ENCODE measurements at regions of chr15 and their contacts with region 1.

Region 1: DNA sequence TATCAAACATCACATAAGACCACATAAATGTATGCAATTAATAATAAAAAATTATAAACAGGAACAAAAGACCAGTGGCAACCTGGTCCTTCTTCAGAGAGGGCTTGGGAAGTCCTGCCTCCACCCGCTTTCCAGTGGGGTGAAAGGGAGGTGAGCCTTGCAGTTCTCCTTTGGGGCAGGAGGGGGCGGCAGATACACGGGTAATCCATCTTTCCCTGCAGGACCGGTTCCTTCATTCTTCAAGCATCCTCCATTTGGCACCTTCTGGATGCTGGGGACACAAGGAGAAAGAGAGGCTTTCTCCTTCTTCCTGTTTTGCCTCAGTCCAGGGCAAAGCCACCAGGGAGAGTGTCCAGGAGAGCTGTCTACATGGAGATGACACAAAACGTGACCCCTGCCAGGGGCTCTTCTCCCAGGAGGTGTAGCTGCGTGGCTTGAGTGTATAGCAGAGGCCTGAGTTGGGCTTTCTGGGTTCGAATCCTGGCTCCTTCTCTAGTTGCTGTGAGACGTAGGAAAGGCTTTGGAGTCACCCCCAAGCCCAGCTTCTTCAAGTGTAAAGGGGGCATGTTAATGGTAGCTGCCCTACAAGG is 23.2 kb downstream of the RPLP1 start:
- DNase-seq: peak; percentile 45 to 82 (median 78)
- ATAC-seq: peak; percentile 95
- H3K4me3 ChIP-seq: no peak overlapping the region
- H3K4me3 Mint-ChIP-seq: no peak overlapping the region
- H3K27ac ChIP-seq: no peak overlapping the region
- H3K27ac Mint-ChIP-seq: no peak overlapping the region
- H3K4me1 ChIP-seq: no peaks in the 10 kb centered on the region
- H3K4me1 Mint-ChIP-seq: no peaks in the 10 kb centered on the region
- H3K27me3 ChIP-seq: no peaks in the 10 kb centered on the region
- H3K27me3 Mint-ChIP-seq: peaks cover 6% of the 10 kb centered on the region
- CTCF ChIP-seq: peak; percentile 98

Region 2: DNA sequence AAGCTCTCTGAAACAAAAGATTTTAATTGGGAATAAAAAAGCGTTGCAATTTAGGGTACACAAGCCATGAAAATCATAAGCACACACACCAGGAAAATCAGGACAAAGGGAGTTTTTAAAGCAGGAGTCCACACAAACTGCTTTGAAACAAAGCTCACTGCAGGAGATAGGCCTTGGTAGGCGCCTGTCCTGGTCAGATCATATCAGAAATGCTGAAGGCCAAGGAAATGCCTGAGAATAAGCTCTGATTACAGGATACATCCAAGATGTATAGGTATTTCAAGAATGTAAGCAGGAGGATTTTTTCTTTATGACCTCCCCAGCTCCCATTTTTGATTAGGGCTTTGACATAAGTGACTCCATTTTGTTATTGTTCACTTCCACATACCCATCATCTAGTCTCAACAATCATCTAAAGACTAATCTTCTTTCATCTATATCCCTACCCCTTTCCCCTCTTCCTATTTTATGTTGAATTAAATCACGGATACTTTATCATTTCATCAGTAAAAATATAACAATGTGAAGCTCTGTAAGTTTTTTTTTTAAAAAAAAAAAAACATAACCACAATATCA is 526.8 kb before region 1 on chr15:
- CTCF ChIA-PET with region 1: no interaction called
- POLR2A ChIA-PET with region 1: no interaction called
- intact Hi-C with region 1: no loop called
- DNase-seq: no peak
- ATAC-seq: no peak
- H3K4me3 ChIP-seq: no peak overlapping the region
- H3K4me3 Mint-ChIP-seq: no peak overlapping the region
- H3K27ac ChIP-seq: no peak overlapping the region
- H3K27ac Mint-ChIP-seq: no peak overlapping the region
- H3K4me1 ChIP-seq: no peaks in the 10 kb centered on the region
- H3K4me1 Mint-ChIP-seq: no peaks in the 10 kb centered on the region
- H3K27me3 ChIP-seq: no peaks in the 10 kb centered on the region
- H3K27me3 Mint-ChIP-seq: peaks cover 10% of the 10 kb centered on the region
- CTCF ChIP-seq: no peak

Region 3: GRCh38 chr15:69045808-69046207 is 430.1 kb before region 1 on chr15:
- CTCF ChIA-PET with region 1: no interaction called
- POLR2A ChIA-PET with region 1: no interaction called
- intact Hi-C with region 1: no loop called
- DNase-seq: no peak
- ATAC-seq: no peak
- H3K4me3 ChIP-seq: no peak overlapping the region
- H3K4me3 Mint-ChIP-seq: no peak overlapping the region
- H3K27ac ChIP-seq: no peak overlapping the region
- H3K27ac Mint-ChIP-seq: no peak overlapping the region
- H3K4me1 ChIP-seq: no peaks in the 10 kb centered on the region
- H3K4me1 Mint-ChIP-seq: no peaks in the 10 kb centered on the region
- H3K27me3 ChIP-seq: no peaks in the 10 kb centered on the region
- H3K27me3 Mint-ChIP-seq: peaks cover 5% of the 10 kb centered on the region
- CTCF ChIP-seq: no peak

Region 4: GRCh38 chr15:69462493-69463181 is 13.2 kb before region 1 on chr15:
- CTCF ChIA-PET with region 1: interaction called, 17 read pairs
- POLR2A ChIA-PET with region 1: no interaction called
- intact Hi-C with region 1: no loop called
- DNase-seq: peak; percentile 84 to 96 (median 93)
- ATAC-seq: peak; percentile 97
- H3K4me3 ChIP-seq: peak overlapping the region; percentile 69 to 72
- H3K4me3 Mint-ChIP-seq: peak overlapping the region; percentile 91
- H3K27ac ChIP-seq: peak overlapping the region; percentile 66 to 70
- H3K27ac Mint-ChIP-seq: peak overlapping the region; percentile 93
- H3K4me1 ChIP-seq: peaks cover 21% of the 10 kb centered on the region
- H3K4me1 Mint-ChIP-seq: peaks cover 26% of the 10 kb centered on the region
- H3K27me3 ChIP-seq: no peaks in the 10 kb centered on the region
- H3K27me3 Mint-ChIP-seq: no peaks in the 10 kb centered on the region
- CTCF ChIP-seq: peak; percentile 81

Region 5: DNA sequence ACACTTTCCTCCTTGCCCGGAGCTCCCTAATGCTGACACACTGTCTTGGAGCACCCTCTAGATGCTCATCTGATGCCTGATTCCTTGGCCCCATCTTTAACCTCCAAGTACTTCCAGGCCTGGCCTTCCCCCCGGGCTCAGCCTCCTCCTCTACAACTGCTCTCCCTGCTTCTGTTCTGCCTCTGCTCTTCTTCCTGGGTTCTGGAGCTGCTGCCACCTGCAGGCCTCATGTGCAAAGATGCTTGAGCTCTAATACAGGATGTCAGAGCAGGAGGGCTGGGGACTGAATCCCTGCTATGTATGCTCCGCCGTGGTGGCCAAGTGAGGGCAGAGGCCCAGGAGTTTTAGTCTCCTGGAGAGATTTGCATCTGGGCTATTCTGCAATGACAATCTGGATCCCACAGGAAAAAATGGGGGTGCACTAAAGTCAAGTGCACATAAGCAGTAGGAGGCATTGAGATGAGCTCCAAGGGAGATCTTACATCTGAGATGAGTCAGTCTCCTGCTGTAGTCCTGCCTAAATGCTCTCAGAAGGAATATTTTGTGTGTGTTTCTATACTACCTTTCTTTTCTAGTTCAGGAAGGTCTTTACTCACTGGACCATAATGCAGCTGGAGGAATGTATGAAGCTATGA is 991.1 kb after region 1 on chr15:
- CTCF ChIA-PET with region 1: interaction called, 76 read pairs
- POLR2A ChIA-PET with region 1: no interaction called
- intact Hi-C with region 1: no loop called
- DNase-seq: peak in 7 of 9 experiments; percentile 35 to 71 (median 55)
- ATAC-seq: peak; percentile 79
- H3K4me3 ChIP-seq: no peak overlapping the region
- H3K4me3 Mint-ChIP-seq: no peak overlapping the region
- H3K27ac ChIP-seq: no peak overlapping the region
- H3K27ac Mint-ChIP-seq: no peak overlapping the region
- H3K4me1 ChIP-seq: no peaks in the 10 kb centered on the region
- H3K4me1 Mint-ChIP-seq: peaks cover 5% of the 10 kb centered on the region
- H3K27me3 ChIP-seq: no peaks in the 10 kb centered on the region
- H3K27me3 Mint-ChIP-seq: peaks cover 8% of the 10 kb centered on the region
- CTCF ChIP-seq: peak; percentile 58

Region 6: GRCh38 chr15:70584838-70585706 is 1109.2 kb after region 1 on chr15:
- CTCF ChIA-PET with region 1: no interaction called
- POLR2A ChIA-PET with region 1: no interaction called
- intact Hi-C with region 1: loop called (anchors 1 to 10 kb)
- DNase-seq: peak; percentile 25 to 70 (median 59)
- ATAC-seq: peak; percentile 82
- H3K4me3 ChIP-seq: peak overlapping the region in 1 of 2 experiments; percentile 33
- H3K4me3 Mint-ChIP-seq: peak overlapping the region; percentile 53
- H3K27ac ChIP-seq: no peak overlapping the region
- H3K27ac Mint-ChIP-seq: no peak overlapping the region
- H3K4me1 ChIP-seq: peaks cover 12% of the 10 kb centered on the region
- H3K4me1 Mint-ChIP-seq: peaks cover 10% of the 10 kb centered on the region
- H3K27me3 ChIP-seq: peaks cover 0 to 7% of the 10 kb centered on the region in 2 experiments
- H3K27me3 Mint-ChIP-seq: peaks cover 20% of the 10 kb centered on the region
- CTCF ChIP-seq: peak; percentile 69

Region 7: GRCh38 chr15:70722266-70723121 is 1246.6 kb after region 1 on chr15:
- CTCF ChIA-PET with region 1: interaction called, 13 read pairs
- POLR2A ChIA-PET with region 1: no interaction called
- intact Hi-C with region 1: loop called (anchors 10 kb)
- DNase-seq: peak in 2 of 9 experiments; percentile 57 to 70
- ATAC-seq: no peak
- H3K4me3 ChIP-seq: no peak overlapping the region
- H3K4me3 Mint-ChIP-seq: no peak overlapping the region
- H3K27ac ChIP-seq: no peak overlapping the region
- H3K27ac Mint-ChIP-seq: no peak overlapping the region
- H3K4me1 ChIP-seq: no peaks in the 10 kb centered on the region
- H3K4me1 Mint-ChIP-seq: no peaks in the 10 kb centered on the region
- H3K27me3 ChIP-seq: no peaks in the 10 kb centered on the region
- H3K27me3 Mint-ChIP-seq: peaks cover 11% of the 10 kb centered on the region
- CTCF ChIP-seq: peak; percentile 90

Region 8: DNA sequence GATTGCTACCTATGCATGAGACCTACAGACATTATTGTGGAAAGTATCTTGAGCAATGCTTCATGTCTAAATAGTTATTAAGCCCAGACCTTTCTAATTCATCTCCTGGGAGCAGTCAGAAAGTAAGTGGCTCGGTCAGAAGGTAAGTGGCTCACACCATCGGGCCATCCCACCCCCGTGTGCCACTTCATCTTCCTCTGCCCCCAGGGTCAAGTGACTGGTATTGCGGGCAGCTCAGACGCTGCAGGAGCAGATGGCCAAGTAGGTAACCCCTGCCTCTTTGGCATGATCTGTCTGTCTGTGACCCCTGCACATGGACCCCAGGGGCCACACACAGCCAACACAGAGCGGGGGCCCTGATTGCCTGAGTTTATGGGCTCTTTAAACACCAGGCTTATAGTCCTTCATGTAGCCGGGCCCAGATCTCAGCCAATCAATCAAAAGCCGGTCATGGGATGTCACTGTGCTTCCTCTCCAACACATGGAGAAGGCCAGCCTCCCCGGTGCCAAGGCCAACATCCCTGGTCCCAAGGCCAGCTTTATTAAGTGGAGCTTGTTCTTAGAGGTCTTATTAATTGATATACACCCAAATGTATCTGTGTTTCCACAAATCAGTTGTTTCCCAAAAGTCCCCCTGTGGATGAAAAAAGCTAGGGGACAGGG is 1335.2 kb after region 1 on chr15:
- CTCF ChIA-PET with region 1: interaction called, 6 read pairs
- POLR2A ChIA-PET with region 1: no interaction called
- intact Hi-C with region 1: loop called in 1 of 2 experiments (anchors 1 kb)
- DNase-seq: no peak
- ATAC-seq: no peak
- H3K4me3 ChIP-seq: no peak overlapping the region
- H3K4me3 Mint-ChIP-seq: no peak overlapping the region
- H3K27ac ChIP-seq: no peak overlapping the region
- H3K27ac Mint-ChIP-seq: no peak overlapping the region
- H3K4me1 ChIP-seq: no peaks in the 10 kb centered on the region
- H3K4me1 Mint-ChIP-seq: peaks cover 4% of the 10 kb centered on the region
- H3K27me3 ChIP-seq: no peaks in the 10 kb centered on the region
- H3K27me3 Mint-ChIP-seq: peaks cover 10% of the 10 kb centered on the region
- CTCF ChIP-seq: no peak

Region 9: DNA sequence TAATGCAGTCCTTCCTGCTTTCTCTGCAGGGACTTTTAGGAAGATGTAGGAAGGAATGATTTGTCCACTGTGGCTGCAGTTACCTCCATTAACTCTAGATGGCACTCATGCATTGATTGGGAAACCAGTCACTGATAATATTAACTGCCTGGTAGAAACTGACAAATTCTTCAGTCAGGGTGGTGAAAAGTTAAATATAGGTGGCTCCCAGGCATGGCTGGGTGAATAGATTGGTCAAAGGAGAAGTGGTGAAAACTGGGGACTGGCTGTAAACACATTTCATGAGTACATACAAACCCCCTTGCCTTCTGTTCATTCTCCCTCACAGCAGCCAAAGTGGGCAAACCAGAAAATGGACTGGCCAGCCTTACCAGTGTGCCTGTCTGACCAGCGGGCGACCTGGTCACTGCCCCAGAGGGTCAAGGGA is 1972.8 kb after region 1 on chr15:
- CTCF ChIA-PET with region 1: no interaction called
- POLR2A ChIA-PET with region 1: no interaction called
- intact Hi-C with region 1: loop called in 1 of 2 experiments (anchors 10 kb)
- DNase-seq: peak in 2 of 9 experiments; percentile 5 to 13
- ATAC-seq: no peak
- H3K4me3 ChIP-seq: no peak overlapping the region
- H3K4me3 Mint-ChIP-seq: no peak overlapping the region
- H3K27ac ChIP-seq: no peak overlapping the region
- H3K27ac Mint-ChIP-seq: no peak overlapping the region
- H3K4me1 ChIP-seq: no peaks in the 10 kb centered on the region
- H3K4me1 Mint-ChIP-seq: no peaks in the 10 kb centered on the region
- H3K27me3 ChIP-seq: no peaks in the 10 kb centered on the region
- H3K27me3 Mint-ChIP-seq: no peaks in the 10 kb centered on the region
- CTCF ChIP-seq: peak; percentile 21

Measured in CD8-positive, alpha-beta T cell (primary cell).